HCT116 (cell line): ENCODE measurements at regions of chr11 and their contacts with region 1.

Region 1: GRCh38 chr11:116641561-116642045 is 131.2 kb downstream of the BUD13 start:
- DNase-seq: peak; percentile 32
- ATAC-seq: peak; percentile 98
- H3K4me3 ChIP-seq: no peak overlapping the region
- H3K27ac ChIP-seq: no peak overlapping the region
- H3K4me1 ChIP-seq: no peaks in the 10 kb centered on the region
- H3K27me3 ChIP-seq: peaks cover 30% of the 10 kb centered on the region
- CTCF ChIP-seq: peak; percentile 57 to 86 (median 84); a peak in 5 of 6 replicates
- POLR2A ChIP-seq: no peak
- RAD21 ChIP-seq: peak; percentile 84

Region 2: DNA sequence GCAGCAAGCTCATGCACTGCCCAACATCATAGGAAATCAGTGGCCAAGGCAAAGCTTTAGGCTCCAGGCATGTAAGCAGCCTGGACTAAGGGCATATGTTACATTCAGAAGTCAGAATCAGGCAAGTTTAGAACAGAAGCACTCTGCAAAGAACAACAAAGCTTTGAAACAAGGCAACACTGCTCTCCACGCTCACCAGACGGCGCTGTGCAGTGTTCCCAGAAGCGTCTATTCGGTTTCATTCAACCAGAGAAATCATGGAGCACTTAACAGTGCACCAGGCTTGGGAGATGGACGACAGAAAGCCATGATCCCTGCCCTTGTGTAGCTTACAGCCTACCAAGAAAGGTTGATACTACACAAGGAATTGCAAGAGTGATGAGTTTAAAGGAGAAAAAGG is 424.6 kb before region 1 on chr11:
- CTCF ChIA-PET with region 1: interaction called, 5 read pairs
- POLR2A ChIA-PET with region 1: no interaction called
- RAD21 ChIA-PET with region 1: no interaction called
- intact Hi-C with region 1: loop called (anchors 10 kb)
- DNase-seq: peak; percentile 27
- ATAC-seq: peak; percentile 89
- H3K4me3 ChIP-seq: no peak overlapping the region
- H3K27ac ChIP-seq: no peak overlapping the region
- H3K4me1 ChIP-seq: no peaks in the 10 kb centered on the region
- H3K27me3 ChIP-seq: peaks cover 14% of the 10 kb centered on the region; the same call in 1 of the 2 replicates
- CTCF ChIP-seq: peak; percentile 61 to 91 (median 87)
- POLR2A ChIP-seq: no peak
- RAD21 ChIP-seq: peak; percentile 52

Region 3: DNA sequence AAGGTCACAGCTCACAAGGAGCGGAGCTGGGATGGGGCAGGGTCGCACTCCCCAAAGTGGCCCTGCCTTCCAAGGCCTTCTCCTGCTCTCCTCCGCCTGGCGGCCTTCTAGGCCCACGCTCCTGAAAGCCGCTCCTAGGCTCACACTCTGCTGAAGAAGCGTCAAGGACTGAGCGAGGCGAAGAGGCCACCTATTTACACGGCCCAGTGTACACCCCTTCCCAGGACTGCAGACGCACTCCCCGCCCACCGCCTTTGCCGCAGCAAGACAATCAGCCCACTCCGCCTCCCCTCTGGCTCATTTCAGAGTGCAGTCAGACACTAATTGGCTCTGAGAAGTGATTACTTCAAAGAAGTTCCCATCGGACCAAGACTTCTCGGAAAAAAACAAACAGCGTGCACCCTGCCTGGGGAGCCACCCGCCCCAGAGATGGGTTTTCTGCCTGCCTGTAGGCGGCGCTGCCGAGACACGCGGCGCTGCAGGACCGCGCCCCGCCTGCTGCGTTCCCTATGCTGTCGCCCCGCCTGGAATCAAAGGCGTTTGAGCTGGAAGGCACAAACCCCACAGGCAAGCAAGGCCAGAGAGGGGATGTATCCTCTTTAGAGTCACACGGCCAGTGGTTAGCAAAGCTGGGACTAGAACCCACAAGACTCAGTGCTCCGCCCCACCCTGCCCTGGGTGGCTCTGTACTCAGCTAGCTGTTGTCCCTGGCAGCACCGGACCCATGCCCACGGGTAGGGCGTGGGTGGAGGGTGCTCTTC is 283.6 kb before region 1 on chr11:
- CTCF ChIA-PET with region 1: no interaction called
- POLR2A ChIA-PET with region 1: no interaction called
- RAD21 ChIA-PET with region 1: no interaction called
- intact Hi-C with region 1: loop called (anchors 1 kb)
- DNase-seq: peak; percentile 37
- ATAC-seq: peak; percentile 97
- H3K4me3 ChIP-seq: no peak overlapping the region
- H3K27ac ChIP-seq: no peak overlapping the region
- H3K4me1 ChIP-seq: no peaks in the 10 kb centered on the region
- H3K27me3 ChIP-seq: peaks cover 34% of the 10 kb centered on the region
- CTCF ChIP-seq: peak; percentile 51 to 95 (median 92); a peak in 5 of 6 replicates
- POLR2A ChIP-seq: no peak
- RAD21 ChIP-seq: peak; percentile 72

Region 4: DNA sequence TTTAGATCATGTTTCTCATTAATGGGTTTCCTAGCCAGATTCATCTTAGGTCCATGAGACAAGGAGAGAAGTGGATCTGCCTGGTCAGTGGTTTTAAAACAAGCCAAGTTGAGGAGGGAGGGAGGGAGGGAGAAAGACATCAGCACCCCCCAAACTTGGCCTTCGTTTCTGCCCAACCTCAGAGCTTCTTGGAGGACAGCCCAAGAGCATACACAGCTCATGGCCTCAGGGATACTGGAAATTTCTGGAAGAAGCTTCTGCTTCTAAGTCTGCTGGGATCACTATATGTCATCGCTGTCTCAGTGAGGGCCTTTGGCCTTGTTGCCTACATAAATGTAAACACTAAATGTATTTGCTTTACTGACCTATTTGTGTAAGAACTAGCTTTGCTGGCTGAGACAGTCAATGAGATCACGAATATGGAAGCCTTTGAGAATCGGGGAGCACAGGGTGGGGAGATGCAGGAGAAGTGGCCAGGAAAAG is 244.0 kb before region 1 on chr11:
- CTCF ChIA-PET with region 1: no interaction called
- POLR2A ChIA-PET with region 1: no interaction called
- RAD21 ChIA-PET with region 1: no interaction called
- intact Hi-C with region 1: no loop called
- DNase-seq: no peak
- ATAC-seq: no peak
- H3K4me3 ChIP-seq: no peak overlapping the region
- H3K27ac ChIP-seq: no peak overlapping the region
- H3K4me1 ChIP-seq: no peaks in the 10 kb centered on the region
- H3K27me3 ChIP-seq: peaks cover 13% of the 10 kb centered on the region
- CTCF ChIP-seq: no peak
- POLR2A ChIP-seq: no peak
- RAD21 ChIP-seq: no peak

Region 5: DNA sequence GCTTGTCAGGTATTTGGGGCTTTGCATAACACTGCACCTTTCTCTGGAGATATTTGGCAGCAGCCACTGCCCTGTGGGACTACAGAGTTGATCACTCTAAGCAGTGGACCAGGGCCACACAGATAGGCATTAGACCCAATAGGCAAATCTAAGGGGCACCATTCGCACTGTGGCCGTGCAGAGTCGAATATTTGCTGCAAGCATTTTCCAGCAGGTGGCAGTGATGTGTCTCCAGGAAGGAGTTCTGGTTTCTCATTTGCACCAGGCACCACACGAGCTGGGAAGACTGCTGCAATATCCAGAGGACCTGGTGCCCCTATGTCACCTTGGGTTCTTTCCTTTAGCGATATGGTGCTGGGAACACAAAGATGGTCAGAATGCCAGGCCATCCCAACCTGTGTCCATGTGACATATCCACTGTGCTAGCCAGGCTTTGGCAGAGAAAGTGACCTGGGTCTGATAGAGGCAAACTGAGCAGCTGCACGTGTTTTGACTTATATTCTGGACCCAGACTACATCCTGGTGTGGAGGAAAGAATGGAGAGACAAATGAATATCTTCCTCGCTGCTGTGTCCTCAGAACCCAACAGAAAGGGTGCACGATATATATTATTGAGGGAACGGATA is 187.5 kb before region 1 on chr11:
- CTCF ChIA-PET with region 1: interaction called, 15 read pairs
- POLR2A ChIA-PET with region 1: no interaction called
- RAD21 ChIA-PET with region 1: no interaction called
- intact Hi-C with region 1: loop called (anchors 1 kb)
- DNase-seq: no peak
- ATAC-seq: peak; percentile 92
- H3K4me3 ChIP-seq: no peak overlapping the region
- H3K27ac ChIP-seq: no peak overlapping the region
- H3K4me1 ChIP-seq: no peaks in the 10 kb centered on the region
- H3K27me3 ChIP-seq: no peaks in the 10 kb centered on the region
- CTCF ChIP-seq: peak; percentile 61 to 64 (median 61)
- POLR2A ChIP-seq: no peak
- RAD21 ChIP-seq: peak; percentile 65

Region 6: DNA sequence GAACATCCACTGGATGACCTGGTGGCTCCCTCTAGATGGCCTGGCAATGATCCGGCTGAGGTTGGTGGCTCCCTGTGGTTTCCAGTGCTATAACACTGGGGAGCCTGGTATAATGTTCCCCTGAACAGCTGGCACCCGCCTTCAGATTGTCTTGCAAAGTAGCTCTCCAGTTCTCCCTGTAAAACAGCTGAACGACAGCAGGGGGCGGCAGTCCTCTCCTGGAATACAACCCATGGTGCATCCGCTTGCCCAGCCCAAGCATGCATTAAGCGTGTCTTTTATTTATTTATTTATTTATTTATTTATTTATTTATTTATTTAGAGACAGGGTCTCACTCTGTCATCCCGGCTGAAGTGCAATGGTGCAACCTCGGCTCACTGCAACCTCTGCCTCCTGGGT is 127.7 kb before region 1 on chr11:
- CTCF ChIA-PET with region 1: interaction called, 38 read pairs
- POLR2A ChIA-PET with region 1: no interaction called
- RAD21 ChIA-PET with region 1: interaction called, 4 to 13 read pairs
- intact Hi-C with region 1: loop called (anchors 1 kb)
- DNase-seq: peak; percentile 46
- ATAC-seq: peak; percentile 84
- H3K4me3 ChIP-seq: no peak overlapping the region
- H3K27ac ChIP-seq: no peak overlapping the region
- H3K4me1 ChIP-seq: no peaks in the 10 kb centered on the region
- H3K27me3 ChIP-seq: peaks cover 25% of the 10 kb centered on the region; the same call in 1 of the 2 replicates
- CTCF ChIP-seq: peak; percentile 43 to 65 (median 56)
- POLR2A ChIP-seq: no peak
- RAD21 ChIP-seq: peak; percentile 60

Region 7: GRCh38 chr11:116927163-116927974 is 285.8 kb after region 1 on chr11:
- CTCF ChIA-PET with region 1: no interaction called
- POLR2A ChIA-PET with region 1: no interaction called
- RAD21 ChIA-PET with region 1: no interaction called
- intact Hi-C with region 1: no loop called
- DNase-seq: no peak
- ATAC-seq: peak; percentile 61; the same call in 1 of the 2 replicates
- H3K4me3 ChIP-seq: no peak overlapping the region
- H3K27ac ChIP-seq: no peak overlapping the region
- H3K4me1 ChIP-seq: peaks cover 0 to 10% of the 10 kb centered on the region in 2 experiments; a peak in 2 of 4 replicates
- H3K27me3 ChIP-seq: no peaks in the 10 kb centered on the region
- CTCF ChIP-seq: peak in 2 of 3 experiments; percentile 58 to 60; a peak in 4 of 6 replicates
- POLR2A ChIP-seq: no peak
- RAD21 ChIP-seq: peak; percentile 44